ENCODE measurements at regions of chr18 and their contacts with region 1.

Region 1: GRCh38 chr18:75478996-75479880 is 51.7 kb upstream of the SMIM21 start:
- DNase-seq: peak in 1 of 2 donors; percentile 71
- ATAC-seq: peak in 1 of 3 donors; percentile 65
- H3K4me3 ChIP-seq: no peak overlapping the region
- H3K4me3 Mint-ChIP-seq: no peak overlapping the region
- H3K27ac ChIP-seq: no peak overlapping the region
- H3K27ac Mint-ChIP-seq: no peak overlapping the region
- H3K4me1 ChIP-seq: no peaks in the 10 kb centered on the region
- H3K4me1 Mint-ChIP-seq: no peaks in the 10 kb centered on the region
- H3K27me3 ChIP-seq: peaks cover 4% of the 10 kb centered on the region
- H3K27me3 Mint-ChIP-seq: peaks cover 9 to 54% of the 10 kb centered on the region in 2 donors
- CTCF ChIP-seq: peak; percentile 65

Region 2: DNA sequence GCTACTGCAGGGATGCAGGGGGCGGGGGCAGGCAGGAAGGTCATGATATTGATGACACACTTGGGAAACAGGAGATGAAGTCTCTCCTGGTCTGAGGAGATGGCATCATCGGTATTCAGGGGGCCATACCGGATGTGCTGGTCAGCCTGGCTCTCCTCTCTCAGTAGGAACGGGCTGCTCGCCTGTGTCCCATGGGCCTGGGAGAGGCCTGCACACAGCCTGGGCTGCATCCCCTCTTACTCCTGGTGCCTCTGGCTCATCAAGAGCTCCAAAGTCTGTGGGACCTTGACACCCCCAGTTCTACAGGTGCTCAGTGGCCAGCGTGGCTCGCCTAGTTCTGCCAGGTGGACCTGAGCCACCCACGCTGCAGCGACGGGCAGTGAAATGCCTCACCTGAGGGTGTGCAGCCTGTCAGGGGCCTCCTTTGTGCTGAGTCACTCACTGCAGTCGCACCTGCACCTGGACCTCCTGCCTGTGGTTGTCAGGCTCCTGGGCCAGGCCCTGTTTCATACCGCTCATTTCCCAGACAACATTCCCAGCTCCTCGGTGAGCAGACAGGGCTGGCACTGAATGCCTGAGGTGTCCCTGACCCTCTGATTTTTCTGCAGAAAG is 963.5 kb before region 1 on chr18:
- intact Hi-C with region 1: no loop called
- DNase-seq: no peak
- ATAC-seq: no peak
- H3K4me3 ChIP-seq: no peak overlapping the region
- H3K4me3 Mint-ChIP-seq: no peak overlapping the region
- H3K27ac ChIP-seq: no peak overlapping the region
- H3K27ac Mint-ChIP-seq: no peak overlapping the region
- H3K4me1 ChIP-seq: no peaks in the 10 kb centered on the region
- H3K4me1 Mint-ChIP-seq: peaks cover 6 to 23% of the 10 kb centered on the region in 2 donors
- H3K27me3 ChIP-seq: no peaks in the 10 kb centered on the region
- H3K27me3 Mint-ChIP-seq: no peaks in the 10 kb centered on the region
- CTCF ChIP-seq: no peak

Region 3: DNA sequence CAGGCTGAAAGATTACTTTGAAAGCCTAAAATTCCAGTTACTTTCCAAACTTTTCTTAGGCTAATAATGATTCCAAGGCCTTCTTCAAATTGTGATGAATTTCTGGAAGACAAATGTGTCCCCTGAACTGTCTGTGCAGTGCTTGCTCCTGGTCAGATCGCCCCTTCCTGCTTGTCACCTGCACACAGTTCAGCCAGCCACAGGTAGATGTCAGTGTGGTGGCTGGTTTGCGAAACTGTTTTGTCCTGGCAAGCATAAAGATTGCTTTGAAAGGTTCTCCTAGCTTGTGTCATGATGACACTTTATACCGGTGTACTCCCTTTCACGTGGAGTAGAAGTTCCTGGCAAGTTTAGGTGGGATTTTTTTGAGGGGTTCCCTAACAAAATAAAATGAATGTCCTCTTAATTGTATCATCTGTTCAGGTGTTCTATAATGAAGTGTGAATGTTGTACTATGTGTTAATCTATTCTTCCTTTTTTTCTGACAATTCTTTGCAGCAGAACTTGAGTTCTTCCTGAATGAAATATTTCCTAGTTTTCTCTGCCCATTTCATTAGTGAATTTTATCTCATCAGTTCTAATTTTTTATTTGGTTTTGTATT is 582.7 kb before region 1 on chr18:
- intact Hi-C with region 1: loop called (anchors 2 kb)
- DNase-seq: peak; percentile 20 to 73
- ATAC-seq: peak; percentile 70 to 81 (median 76)
- H3K4me3 ChIP-seq: no peak overlapping the region
- H3K4me3 Mint-ChIP-seq: no peak overlapping the region
- H3K27ac ChIP-seq: no peak overlapping the region
- H3K27ac Mint-ChIP-seq: no peak overlapping the region
- H3K4me1 ChIP-seq: no peaks in the 10 kb centered on the region
- H3K4me1 Mint-ChIP-seq: peaks cover 16 to 18% of the 10 kb centered on the region in 2 donors
- H3K27me3 ChIP-seq: no peaks in the 10 kb centered on the region
- H3K27me3 Mint-ChIP-seq: no peaks in the 10 kb centered on the region
- CTCF ChIP-seq: peak; percentile 60

Region 4: GRCh38 chr18:75173125-75173432 is 306.2 kb before region 1 on chr18:
- intact Hi-C with region 1: loop called (anchors 10 kb)
- DNase-seq: peak in 1 of 2 donors; percentile 35
- ATAC-seq: peak in 1 of 3 donors; percentile 36
- H3K4me3 ChIP-seq: no peak overlapping the region
- H3K4me3 Mint-ChIP-seq: no peak overlapping the region
- H3K27ac ChIP-seq: no peak overlapping the region
- H3K27ac Mint-ChIP-seq: no peak overlapping the region
- H3K4me1 ChIP-seq: no peaks in the 10 kb centered on the region
- H3K4me1 Mint-ChIP-seq: peaks cover 9 to 14% of the 10 kb centered on the region in 2 donors
- H3K27me3 ChIP-seq: no peaks in the 10 kb centered on the region
- H3K27me3 Mint-ChIP-seq: no peaks in the 10 kb centered on the region
- CTCF ChIP-seq: no peak

Measured in natural killer cell (primary cell).